Activated CD4-positive, alpha-beta T cell treated with anti-CD3 and anti-CD28 coated beads for 36 hours (primary cell): ENCODE measurements at regions of chr20 and their contacts with region 1.

Region 1: GRCh38 chr20:53957451-53958172 is 112.8 kb downstream of the BCAS1 start:
- DNase-seq: no peak
- ATAC-seq: no peak
- H3K4me3 Mint-ChIP-seq: no peak overlapping the region
- H3K27ac Mint-ChIP-seq: no peak overlapping the region
- H3K4me1 Mint-ChIP-seq: peaks cover 2% of the 10 kb centered on the region
- H3K27me3 Mint-ChIP-seq: peaks cover 4% of the 10 kb centered on the region

Region 2: GRCh38 chr20:53970232-53970631 is 12.6 kb after region 1 on chr20:
- CTCF ChIA-PET with region 1: interaction called, 14 read pairs
- POLR2A ChIA-PET with region 1: no interaction called
- intact Hi-C with region 1: no loop called
- DNase-seq: no peak
- ATAC-seq: no peak
- H3K4me3 Mint-ChIP-seq: no peak overlapping the region
- H3K27ac Mint-ChIP-seq: no peak overlapping the region
- H3K4me1 Mint-ChIP-seq: no peaks in the 10 kb centered on the region
- H3K27me3 Mint-ChIP-seq: no peaks in the 10 kb centered on the region